Right cardiac atrium (tissue), 5 donors: ENCODE measurements at regions of chr20 and their contacts with region 1.

Region 1: GRCh38 chr20:38812182-38812581 is 6.7 kb downstream of the PPP1R16B start:
- DNase-seq: no peak
- ATAC-seq: peak; percentile 66 to 81
- H3K4me3 ChIP-seq: no peak overlapping the region
- H3K27ac ChIP-seq: no peak overlapping the region
- H3K4me1 ChIP-seq: peaks cover 6% of the 10 kb centered on the region
- H3K27me3 ChIP-seq: no peaks in the 10 kb centered on the region

Region 2: GRCh38 chr20:38094373-38094891 is 717.8 kb before region 1 on chr20:
- intact Hi-C with region 1: no loop called
- DNase-seq: peak in 2 of 3 donors; percentile 59 to 74
- ATAC-seq: peak in 1 of 2 donors; percentile 62
- H3K4me3 ChIP-seq: no peak overlapping the region
- H3K27ac ChIP-seq: peak overlapping the region; percentile 75
- H3K4me1 ChIP-seq: peaks cover 14% of the 10 kb centered on the region
- H3K27me3 ChIP-seq: no peaks in the 10 kb centered on the region

Region 3: DNA sequence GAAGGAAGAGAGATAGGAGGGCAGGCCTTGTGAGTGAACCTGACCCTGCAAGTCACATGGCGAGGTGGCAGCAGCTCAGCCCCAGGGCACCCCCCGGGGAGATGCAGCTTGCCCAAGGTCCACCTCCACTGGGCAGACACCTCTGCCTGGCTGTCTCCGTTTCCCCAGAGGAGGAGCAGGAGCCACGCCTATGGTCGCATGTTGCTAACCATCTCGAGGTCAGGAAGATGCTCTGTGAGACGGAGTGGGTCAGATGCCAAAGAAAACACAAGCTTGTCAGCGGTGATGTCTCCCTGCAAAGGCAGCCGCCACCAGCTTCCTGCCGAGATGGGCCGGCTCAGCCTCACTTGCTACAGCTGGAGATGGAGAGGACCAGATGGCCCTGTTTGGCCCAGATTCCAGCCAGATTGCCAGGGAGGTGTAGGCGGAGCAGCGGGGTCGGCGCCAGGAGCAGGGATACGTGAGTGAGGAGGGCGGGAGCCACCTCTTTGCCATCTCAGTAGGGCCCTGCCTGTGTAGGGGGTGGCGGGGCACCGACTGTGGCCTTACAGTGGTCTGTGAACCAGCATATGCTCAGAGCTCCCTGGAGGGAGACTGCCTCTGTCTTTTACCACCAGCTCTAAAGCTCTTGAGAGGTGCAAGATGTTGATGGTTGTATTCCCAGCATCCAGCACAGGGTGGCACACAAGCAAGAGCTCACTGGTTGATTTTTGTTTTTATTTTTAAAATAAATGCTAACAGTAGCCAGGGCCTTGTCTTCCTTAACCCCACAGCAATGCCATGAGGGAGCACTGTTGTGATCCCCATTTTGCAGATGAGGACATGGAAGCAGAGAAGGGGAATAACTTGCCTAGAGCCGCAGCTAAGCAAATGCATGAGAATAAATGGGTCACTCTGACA is 71.1 kb after region 1 on chr20:
- intact Hi-C with region 1: loop called in 2 of 4 experiments (anchors 10 kb)
- DNase-seq: peak in 1 of 3 donors; percentile 73
- ATAC-seq: peak; percentile 52 to 61
- H3K4me3 ChIP-seq: no peak overlapping the region
- H3K27ac ChIP-seq: no peak overlapping the region
- H3K4me1 ChIP-seq: peaks cover 2% of the 10 kb centered on the region
- H3K27me3 ChIP-seq: no peaks in the 10 kb centered on the region